A673 (cell line): ENCODE measurements at regions of chr20 and their contacts with region 1.

Region 1: DNA sequence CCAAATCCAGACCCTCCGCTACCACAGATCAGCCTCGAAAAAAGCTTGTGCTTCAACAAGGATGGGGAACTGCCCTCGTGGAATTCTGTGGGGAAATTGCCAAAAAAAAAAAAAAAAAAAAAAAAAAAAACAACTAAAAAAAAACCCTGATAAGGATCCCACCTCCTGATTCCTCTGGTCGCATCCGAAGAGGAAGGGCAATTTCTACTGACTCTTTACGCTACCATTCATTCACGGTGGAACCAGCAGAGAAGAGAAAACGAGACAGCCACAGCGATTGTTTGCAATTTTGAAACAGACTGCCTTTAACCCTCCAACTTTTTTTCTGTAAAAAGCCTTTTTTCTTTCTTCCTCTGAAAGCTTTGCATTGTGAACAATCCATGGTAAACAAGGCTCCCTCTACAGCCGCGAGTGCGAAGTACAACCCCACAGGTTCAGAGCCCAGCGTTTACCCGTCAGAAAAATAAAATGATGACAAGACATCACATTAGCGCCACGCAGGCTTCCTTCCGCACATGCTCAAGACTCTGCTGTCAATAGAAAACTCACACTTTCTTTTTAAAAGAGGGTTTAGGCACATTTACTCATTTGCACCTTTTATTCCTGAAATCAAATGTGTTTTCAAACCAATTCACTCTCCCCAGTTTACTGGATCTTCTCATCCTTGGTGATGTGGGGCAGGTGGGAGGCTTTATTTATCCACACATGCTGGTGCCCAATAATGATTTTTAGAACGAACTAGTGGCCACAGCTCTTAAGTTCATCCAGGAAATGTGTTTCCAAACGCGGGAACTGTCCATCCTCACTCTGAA is 100.0 kb downstream of the NOL4L start:
- DNase-seq: peak; percentile 86
- H3K4me3 ChIP-seq: peak overlapping the region; percentile 67
- H3K27ac ChIP-seq: peak overlapping the region; percentile 7
- H3K4me1 ChIP-seq: no peaks in the 10 kb centered on the region
- H3K27me3 ChIP-seq: peaks cover 4% of the 10 kb centered on the region
- CTCF ChIP-seq: peak; percentile 85

Region 2: DNA sequence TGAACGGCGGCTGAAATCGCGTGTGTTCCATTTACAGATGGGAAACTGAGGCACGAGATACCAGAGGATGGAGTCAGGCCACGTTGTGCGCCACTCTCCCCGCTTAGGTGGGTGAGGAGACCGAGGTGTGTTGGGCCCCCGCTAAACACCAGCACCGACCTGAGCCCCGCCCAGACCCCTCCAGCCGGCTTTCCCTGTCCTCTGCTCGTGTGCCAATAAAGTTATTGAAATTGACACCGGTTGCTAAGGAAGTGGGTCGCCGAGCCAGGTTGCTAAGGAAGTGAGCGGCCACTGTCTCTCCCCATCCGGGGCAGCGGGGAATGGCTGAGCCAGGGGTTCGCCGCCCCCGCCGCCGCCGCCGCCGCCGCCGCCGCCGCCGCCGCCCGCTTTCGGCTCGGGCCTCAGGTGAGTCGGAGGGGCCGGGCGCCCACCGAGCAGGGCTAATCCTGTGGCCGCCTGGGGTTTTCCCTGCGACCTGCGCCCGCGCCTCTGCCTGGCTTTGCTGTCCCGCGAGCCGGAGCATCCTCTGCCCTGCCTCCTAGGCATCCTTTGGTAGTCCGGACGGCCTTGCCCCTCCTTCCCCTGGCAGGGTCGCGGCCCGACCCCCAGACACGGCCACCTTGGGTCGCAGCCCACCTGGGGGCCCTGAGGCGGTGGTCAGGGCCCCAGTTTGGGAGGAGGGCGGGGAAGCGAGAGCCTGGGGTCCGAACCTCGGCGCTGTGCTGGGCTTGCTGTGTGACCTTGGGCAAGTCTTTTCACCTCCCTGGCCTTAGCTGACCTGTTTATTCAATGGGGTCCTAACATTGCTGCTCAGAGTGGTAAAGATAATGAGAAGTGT is 207.6 kb before region 1 on chr20 and contains the start of gene KIF3B:
- CTCF ChIA-PET with region 1: no interaction called
- POLR2A ChIA-PET with region 1: no interaction called
- intact Hi-C with region 1: loop called (anchors 5 kb)
- DNase-seq: peak; percentile 92
- H3K4me3 ChIP-seq: peak within 1 kb of the TSS; percentile 95
- H3K27ac ChIP-seq: peak within 1 kb of the TSS; percentile 64
- H3K4me1 ChIP-seq: peaks cover 4% of the 10 kb centered on the region
- H3K27me3 ChIP-seq: no peaks in the 10 kb centered on the region
- CTCF ChIP-seq: no peak
- total RNA-seq, gene KIF3B: 24.3 and 25.4 TPM in 2 replicates

Region 3: DNA sequence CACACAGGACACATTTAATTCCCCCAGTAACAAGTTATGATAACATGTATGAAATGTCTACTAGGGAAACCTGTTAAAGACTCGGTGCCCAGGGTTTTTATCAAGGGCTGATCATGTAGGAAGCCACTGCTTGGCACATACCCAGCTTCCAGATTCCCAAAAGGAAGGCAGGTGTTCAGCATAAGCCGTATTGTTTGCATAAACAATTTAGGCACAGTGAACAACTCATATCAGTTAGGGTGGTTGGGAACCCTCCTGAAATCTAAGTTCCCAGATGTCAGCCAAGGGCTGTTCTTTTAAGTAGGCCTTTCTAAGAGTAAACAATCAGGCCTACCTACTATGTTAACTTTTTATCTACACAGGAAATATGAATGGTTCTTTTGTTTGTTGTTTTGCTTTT is 52.9 kb before region 1 on chr20:
- CTCF ChIA-PET with region 1: no interaction called
- POLR2A ChIA-PET with region 1: no interaction called
- intact Hi-C with region 1: no loop called
- DNase-seq: no peak
- H3K4me3 ChIP-seq: no peak overlapping the region
- H3K27ac ChIP-seq: no peak overlapping the region
- H3K4me1 ChIP-seq: no peaks in the 10 kb centered on the region
- H3K27me3 ChIP-seq: no peaks in the 10 kb centered on the region
- CTCF ChIP-seq: no peak